Activated naive CD4-positive, alpha-beta T cell treated with anti-CD3 and anti-CD28 coated beads for 36 hours (primary cell): ENCODE measurements at regions of chr1 and their contacts with region 1.

Region 1: GRCh38 chr1:172398970-172399755 is 21.3 kb upstream of the C1orf105 start:
- DNase-seq: peak; percentile 37
- H3K4me3 Mint-ChIP-seq: peak overlapping the region; percentile 19
- H3K27ac Mint-ChIP-seq: peak overlapping the region; percentile 54
- H3K4me1 Mint-ChIP-seq: peaks cover 68% of the 10 kb centered on the region
- H3K27me3 Mint-ChIP-seq: no peaks in the 10 kb centered on the region

Region 2: DNA sequence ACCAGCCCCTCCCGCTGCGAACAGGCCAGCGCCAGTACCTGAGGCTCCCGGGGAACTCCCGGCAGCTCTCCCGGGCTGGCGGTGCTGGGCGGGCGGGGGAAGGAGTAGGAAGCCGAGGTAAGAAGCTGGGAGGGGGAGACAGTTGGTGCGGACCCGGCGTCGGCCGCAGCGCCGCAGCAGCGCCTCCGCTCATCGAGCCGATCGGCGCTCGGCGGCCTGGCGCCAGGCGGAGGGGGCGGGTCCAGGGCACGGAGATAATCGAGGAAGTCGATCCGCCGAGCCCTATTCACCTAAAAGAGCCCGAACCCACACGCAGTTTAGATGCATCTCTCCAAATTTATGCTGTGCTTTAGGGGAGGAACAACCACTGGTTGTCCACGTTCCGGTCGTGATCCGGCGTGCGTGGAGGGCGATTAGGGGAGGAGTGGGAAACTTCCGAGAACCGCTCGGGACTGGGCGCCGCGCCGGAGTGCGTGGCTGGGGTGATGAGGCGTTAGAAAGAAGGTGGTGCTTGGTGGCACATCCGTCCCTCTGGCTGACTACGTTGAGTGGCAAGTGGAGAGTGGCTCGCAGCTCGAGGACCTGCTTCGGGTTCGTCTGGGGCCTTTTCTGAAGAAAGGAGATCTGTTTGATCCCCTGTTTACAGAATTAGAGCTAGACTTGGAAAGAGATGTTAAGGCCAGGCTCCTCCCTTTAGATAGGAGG is 657.1 kb before region 1 on chr1 and contains the start of gene VAMP4:
- CTCF ChIA-PET with region 1: no interaction called
- intact Hi-C with region 1: loop called (anchors 5 kb)
- DNase-seq: peak; percentile 90
- H3K4me3 Mint-ChIP-seq: peak within 1 kb of the TSS; percentile 96
- H3K27ac Mint-ChIP-seq: peak within 1 kb of the TSS; percentile 99
- H3K4me1 Mint-ChIP-seq: peaks cover 40% of the 10 kb centered on the region
- H3K27me3 Mint-ChIP-seq: no peaks in the 10 kb centered on the region
- total RNA-seq, gene VAMP4: 10.5 to 10.9 TPM

Region 3: DNA sequence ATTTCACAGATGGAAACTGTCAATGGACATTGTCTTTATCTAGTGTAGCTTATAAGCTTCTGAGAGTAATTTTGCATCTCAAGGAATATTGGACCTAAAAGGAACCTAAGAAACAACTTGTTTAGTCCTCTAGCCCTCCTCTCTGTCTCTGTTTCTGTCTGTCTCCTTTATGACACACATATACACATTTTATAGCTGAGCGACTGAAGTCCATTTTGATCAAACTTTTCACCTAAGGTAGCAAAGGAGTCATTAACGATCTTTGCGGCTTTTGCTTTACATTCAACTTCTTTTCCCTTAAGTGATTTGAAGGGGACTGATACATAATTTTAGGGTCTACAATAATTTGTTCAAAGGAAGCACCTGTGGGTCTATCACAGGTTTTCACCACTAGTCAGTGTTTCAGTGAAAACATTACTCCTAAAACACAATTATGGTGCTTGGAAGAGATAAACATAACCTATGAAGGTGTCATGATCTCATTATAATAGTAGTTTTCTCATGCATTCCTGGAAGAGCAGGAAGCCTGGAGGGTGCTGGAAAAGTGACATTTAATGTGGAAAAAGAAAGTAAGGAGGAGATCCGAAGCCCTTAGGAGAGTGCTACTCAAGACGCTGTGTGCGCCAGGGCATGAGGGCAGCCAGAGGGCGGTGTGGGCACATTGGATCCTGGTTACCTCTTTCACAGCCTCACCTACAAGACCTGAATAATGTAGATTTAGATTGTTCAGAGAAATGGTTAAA is 309.2 kb before region 1 on chr1:
- CTCF ChIA-PET with region 1: interaction called, 43 read pairs
- intact Hi-C with region 1: loop called (anchors 1 kb)
- DNase-seq: peak; percentile 83
- H3K4me3 Mint-ChIP-seq: no peak overlapping the region
- H3K27ac Mint-ChIP-seq: no peak overlapping the region
- H3K4me1 Mint-ChIP-seq: peaks cover 2% of the 10 kb centered on the region
- H3K27me3 Mint-ChIP-seq: no peaks in the 10 kb centered on the region

Region 4: DNA sequence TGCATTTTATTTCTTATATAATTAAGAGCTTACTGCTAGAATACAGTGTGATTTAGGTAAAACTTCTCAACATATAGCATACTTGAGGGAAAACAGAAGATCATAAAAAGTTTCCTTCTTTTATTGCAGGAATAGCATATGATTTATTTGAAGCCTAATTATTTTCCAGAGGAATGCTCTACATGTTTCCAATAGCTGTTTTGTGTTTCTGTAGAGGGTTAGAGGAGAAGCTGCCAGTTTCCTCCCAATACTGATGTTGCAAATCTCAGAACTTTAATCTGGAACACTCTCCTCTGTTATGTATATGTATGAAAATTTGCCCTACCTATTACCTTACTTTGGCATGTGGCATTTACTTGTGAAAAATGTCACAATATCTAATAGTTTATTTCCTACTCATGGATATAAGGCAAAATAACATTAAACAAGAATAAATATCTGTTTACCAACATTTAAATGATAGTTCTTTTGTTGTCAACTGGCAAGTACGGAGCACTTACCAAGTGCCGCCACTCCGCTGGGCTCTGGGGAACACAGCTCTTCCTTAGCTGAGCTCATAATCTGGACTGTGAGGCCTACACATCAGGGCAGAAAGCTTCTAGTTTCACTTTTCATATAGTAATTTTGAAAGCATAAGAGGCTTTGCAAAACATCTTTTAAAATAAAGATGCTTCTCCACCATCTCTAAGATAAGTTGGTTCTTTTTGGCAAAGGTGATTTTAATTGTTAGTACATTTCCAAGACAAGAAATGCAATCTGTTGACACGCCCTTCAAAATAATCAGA is 218.5 kb before region 1 on chr1:
- CTCF ChIA-PET with region 1: no interaction called
- intact Hi-C with region 1: loop called (anchors 1 kb)
- DNase-seq: peak; percentile 63
- H3K4me3 Mint-ChIP-seq: peak overlapping the region; percentile 67
- H3K27ac Mint-ChIP-seq: peak overlapping the region; percentile 89
- H3K4me1 Mint-ChIP-seq: peaks cover 40% of the 10 kb centered on the region
- H3K27me3 Mint-ChIP-seq: no peaks in the 10 kb centered on the region

Region 5: GRCh38 chr1:172322219-172323061 is 76.7 kb before region 1 on chr1:
- CTCF ChIA-PET with region 1: no interaction called
- intact Hi-C with region 1: no loop called
- DNase-seq: no peak
- H3K4me3 Mint-ChIP-seq: no peak overlapping the region
- H3K27ac Mint-ChIP-seq: no peak overlapping the region
- H3K4me1 Mint-ChIP-seq: no peaks in the 10 kb centered on the region
- H3K27me3 Mint-ChIP-seq: no peaks in the 10 kb centered on the region

Region 6: GRCh38 chr1:172380441-172381244 is 18.5 kb before region 1 on chr1:
- CTCF ChIA-PET with region 1: interaction called, 6 read pairs
- intact Hi-C with region 1: loop called (anchors 1 kb)
- DNase-seq: peak; percentile 68
- H3K4me3 Mint-ChIP-seq: peak overlapping the region; percentile 67
- H3K27ac Mint-ChIP-seq: peak overlapping the region; percentile 86
- H3K4me1 Mint-ChIP-seq: peaks cover 31% of the 10 kb centered on the region
- H3K27me3 Mint-ChIP-seq: no peaks in the 10 kb centered on the region

Region 7: DNA sequence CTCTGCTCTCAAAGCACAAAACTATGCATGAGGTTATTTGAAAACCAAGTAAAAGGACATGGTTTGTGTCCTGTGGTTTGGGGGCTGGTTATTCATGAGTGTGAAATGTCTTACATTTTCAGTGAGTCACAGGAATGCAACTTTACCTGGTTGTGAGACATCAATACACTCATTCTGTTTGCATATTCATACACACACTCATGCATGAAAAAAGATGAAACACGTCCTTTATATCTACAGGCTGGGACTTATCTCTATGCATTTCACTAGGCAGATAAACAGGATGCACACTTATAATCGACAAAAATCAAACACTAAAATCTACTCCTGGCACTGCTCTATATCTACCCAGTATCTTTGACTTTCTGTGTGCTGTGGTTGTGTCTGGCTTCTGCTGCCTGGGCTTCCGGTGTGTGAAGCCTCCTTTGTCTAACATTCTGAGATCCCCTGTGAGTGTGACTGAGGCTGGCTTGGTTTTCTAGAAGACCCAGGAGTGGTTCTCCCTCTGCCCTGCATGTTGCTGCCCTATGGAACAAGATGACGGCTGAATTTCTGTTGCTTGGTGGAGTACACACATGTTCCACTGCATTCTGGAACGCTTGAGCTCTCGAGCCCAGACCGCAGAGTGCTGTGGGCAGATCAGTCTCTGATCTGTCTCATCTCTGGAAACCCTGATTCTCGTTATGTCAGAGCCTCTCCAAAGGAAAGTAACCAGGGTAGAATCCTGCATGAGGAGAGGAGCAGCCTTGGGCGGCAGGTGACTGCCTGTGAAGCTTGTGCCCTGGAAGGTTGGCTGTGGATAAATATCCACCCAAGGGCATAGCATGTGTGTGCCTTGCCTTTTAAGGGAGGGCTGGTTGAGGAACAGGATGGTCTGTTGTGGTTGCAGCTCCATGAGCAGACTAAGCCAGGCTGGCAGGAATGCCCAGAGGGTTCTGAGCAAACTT is 240.0 kb after region 1 on chr1:
- CTCF ChIA-PET with region 1: no interaction called
- intact Hi-C with region 1: loop called (anchors 1 kb)
- DNase-seq: peak; percentile 90
- H3K4me3 Mint-ChIP-seq: peak overlapping the region; percentile 42
- H3K27ac Mint-ChIP-seq: peak overlapping the region; percentile 93
- H3K4me1 Mint-ChIP-seq: peaks cover 73% of the 10 kb centered on the region
- H3K27me3 Mint-ChIP-seq: peaks cover 9% of the 10 kb centered on the region